ENCODE measurements at regions of chr18 and their contacts with region 1.

Region 1: DNA sequence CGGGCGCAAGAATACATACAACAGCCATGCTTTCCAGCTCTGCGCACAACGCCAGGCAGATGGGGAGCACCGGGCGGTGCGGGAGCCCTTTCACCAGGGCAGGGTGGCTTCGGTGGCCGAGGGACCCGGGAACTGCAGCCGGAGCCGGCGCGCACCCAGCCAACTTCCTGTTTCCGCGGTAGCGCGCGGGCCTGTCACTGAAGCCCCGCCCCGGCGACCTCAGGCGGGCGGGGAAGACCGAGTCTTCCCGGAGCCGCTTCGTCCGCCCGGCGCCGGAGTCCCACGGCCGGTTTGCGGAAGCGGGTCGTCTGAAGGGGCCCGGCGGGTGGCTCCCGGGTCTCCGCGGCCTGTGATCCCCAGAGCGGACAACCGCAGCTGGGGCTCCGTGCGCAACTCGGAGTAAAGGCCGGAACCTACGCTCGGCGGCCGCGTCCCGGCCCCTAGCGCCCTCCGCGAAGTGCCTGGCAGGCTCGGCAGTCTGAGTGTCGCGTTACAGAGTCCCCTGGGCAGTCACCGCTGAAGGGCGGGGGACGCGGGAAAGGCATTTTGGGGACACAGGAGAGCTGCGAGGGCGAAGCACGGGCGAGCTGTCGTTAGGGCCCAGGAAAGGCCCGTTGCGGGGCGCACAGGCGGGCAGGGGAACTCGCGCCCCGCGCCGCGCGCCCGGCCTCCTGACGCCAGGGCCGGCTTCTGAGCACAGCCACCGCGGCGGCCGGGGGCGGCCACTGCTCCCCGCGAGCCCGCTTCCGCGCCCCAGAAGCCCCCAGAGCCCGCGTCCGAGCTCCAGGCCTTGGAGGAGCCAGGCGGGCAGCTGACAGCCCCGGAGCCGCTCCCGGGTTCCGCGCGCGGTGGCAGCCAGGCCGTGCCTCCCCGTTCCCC is at the start of gene MPPE1:
- DNase-seq: peak; percentile 38
- ATAC-seq: peak; percentile 92
- H3K4me3 ChIP-seq: peak within 1 kb of the TSS; percentile 88
- H3K27ac ChIP-seq: peak within 1 kb of the TSS; percentile 95
- H3K4me1 ChIP-seq: peaks cover 5% of the 10 kb centered on the region
- H3K27me3 ChIP-seq: no peaks in the 10 kb centered on the region
- CTCF ChIP-seq: no peak
- EP300 ChIP-seq: no peak
- POLR2A ChIP-seq: peak; percentile 88
- RAD21 ChIP-seq: no peak
- polyA plus RNA-seq, gene MPPE1: 13.8 to 15.6 TPM

Region 2: GRCh38 chr18:11175266-11175979 is 733.0 kb before region 1 on chr18:
- CTCF ChIA-PET with region 1: no interaction called
- POLR2A ChIA-PET with region 1: no interaction called
- RAD21 ChIA-PET with region 1: no interaction called
- SMC1A ChIA-PET with region 1: no interaction called
- in situ Hi-C with region 1: no loop called
- intact Hi-C with region 1: no loop called
- DNase-seq: no peak
- ATAC-seq: no peak
- H3K4me3 ChIP-seq: no peak overlapping the region
- H3K27ac ChIP-seq: no peak overlapping the region
- H3K4me1 ChIP-seq: no peaks in the 10 kb centered on the region
- H3K27me3 ChIP-seq: peaks cover 0 to 2% of the 10 kb centered on the region in 2 experiments; a peak in 2 of 4 replicates
- CTCF ChIP-seq: no peak
- EP300 ChIP-seq: no peak
- POLR2A ChIP-seq: no peak
- RAD21 ChIP-seq: no peak

Region 3: GRCh38 chr18:11851146-11851805 is 57.1 kb before region 1 on chr18 and contains the start of gene CHMP1B:
- CTCF ChIA-PET with region 1: interaction called, 5 read pairs
- POLR2A ChIA-PET with region 1: interaction called, 3 read pairs
- RAD21 ChIA-PET with region 1: interaction called, 3 read pairs
- SMC1A ChIA-PET with region 1: no interaction called
- in situ Hi-C with region 1: no loop called
- intact Hi-C with region 1: loop called (anchors 5 kb)
- DNase-seq: peak; percentile 79
- ATAC-seq: peak; percentile 96
- H3K4me3 ChIP-seq: peak within 1 kb of the TSS; percentile 99
- H3K27ac ChIP-seq: peak within 1 kb of the TSS; percentile 90
- H3K4me1 ChIP-seq: peaks cover 17% of the 10 kb centered on the region
- H3K27me3 ChIP-seq: no peaks in the 10 kb centered on the region; a peak in 1 of 4 replicates
- CTCF ChIP-seq: no peak
- EP300 ChIP-seq: no peak
- POLR2A ChIP-seq: peak; percentile 88
- RAD21 ChIP-seq: no peak
- polyA plus RNA-seq, gene CHMP1B: 8.5 to 12.1 TPM

Measured in GM12878 (cell line).